ENCODE measurements at regions of chr22 and their contacts with region 1.

Region 1: GRCh38 chr22:37905534-37906363 is at the start of gene MICALL1:
- DNase-seq: peak; percentile 77
- H3K4me3 Mint-ChIP-seq: peak within 1 kb of the TSS; percentile 78
- H3K27ac Mint-ChIP-seq: peak within 1 kb of the TSS; percentile 84
- H3K4me1 Mint-ChIP-seq: peaks cover 37% of the 10 kb centered on the region
- H3K27me3 Mint-ChIP-seq: no peaks in the 10 kb centered on the region
- CTCF ChIP-seq: no peak
- total RNA-seq, gene MICALL1: 164 and 165 TPM in 2 replicates

Region 2: GRCh38 chr22:37843741-37843990 is 62.1 kb before region 1 on chr22:
- CTCF ChIA-PET with region 1: interaction called, 3 read pairs
- POLR2A ChIA-PET with region 1: interaction called, 18 read pairs
- intact Hi-C with region 1: no loop called
- DNase-seq: peak; percentile 17
- H3K4me3 Mint-ChIP-seq: peak overlapping the region; percentile 82
- H3K27ac Mint-ChIP-seq: no peak overlapping the region
- H3K4me1 Mint-ChIP-seq: peaks cover 5% of the 10 kb centered on the region
- H3K27me3 Mint-ChIP-seq: no peaks in the 10 kb centered on the region
- CTCF ChIP-seq: no peak

Region 3: DNA sequence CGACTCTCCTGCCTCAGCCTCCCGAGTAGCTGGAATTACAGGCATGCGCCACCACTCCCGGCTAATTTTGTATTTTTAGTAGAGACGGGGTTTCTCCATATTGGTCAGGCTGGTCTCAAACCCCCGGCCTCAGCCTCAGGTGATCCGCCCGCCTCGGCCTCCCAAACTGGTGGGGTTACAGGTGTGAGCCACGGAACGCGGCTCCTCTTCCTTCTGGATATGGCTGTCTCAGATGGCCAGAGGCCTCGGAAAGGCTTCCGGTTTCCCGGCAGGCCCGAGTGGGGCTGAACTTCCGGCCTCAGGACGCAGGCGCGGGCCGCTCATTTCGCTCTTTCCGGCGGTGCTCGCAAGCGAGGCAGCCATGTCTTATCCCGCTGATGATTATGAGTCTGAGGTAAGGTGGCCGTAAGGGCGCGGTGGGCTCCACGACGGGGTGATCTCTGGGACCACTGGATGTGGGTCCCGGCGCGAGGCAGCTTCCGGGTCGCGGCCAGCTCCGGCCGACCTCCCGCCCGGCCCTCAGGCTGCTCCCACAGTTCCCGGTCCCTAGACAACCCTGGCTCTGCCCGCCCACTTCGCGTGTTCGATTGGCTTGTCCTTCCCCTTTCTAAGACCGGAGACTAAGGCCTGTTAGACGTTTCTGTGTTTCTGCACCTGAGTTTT is 56.5 kb before region 1 on chr22 and contains the start of gene EIF3L:
- CTCF ChIA-PET with region 1: interaction called, 3 read pairs
- POLR2A ChIA-PET with region 1: interaction called, 18 read pairs
- intact Hi-C with region 1: no loop called
- DNase-seq: peak; percentile 89
- H3K4me3 Mint-ChIP-seq: peak within 1 kb of the TSS; percentile 96
- H3K27ac Mint-ChIP-seq: peak within 1 kb of the TSS; percentile 99
- H3K4me1 Mint-ChIP-seq: peaks cover 24% of the 10 kb centered on the region
- H3K27me3 Mint-ChIP-seq: no peaks in the 10 kb centered on the region
- CTCF ChIP-seq: no peak
- total RNA-seq, gene EIF3L: 395 and 505 TPM in 2 replicates

Region 4: GRCh38 chr22:37917874-37918548 is 12.3 kb after region 1 on chr22:
- CTCF ChIA-PET with region 1: interaction called, 4 read pairs
- POLR2A ChIA-PET with region 1: interaction called, 15 read pairs
- intact Hi-C with region 1: no loop called
- DNase-seq: no peak
- H3K4me3 Mint-ChIP-seq: no peak overlapping the region
- H3K27ac Mint-ChIP-seq: no peak overlapping the region
- H3K4me1 Mint-ChIP-seq: no peaks in the 10 kb centered on the region
- H3K27me3 Mint-ChIP-seq: no peaks in the 10 kb centered on the region
- CTCF ChIP-seq: no peak

Region 5: DNA sequence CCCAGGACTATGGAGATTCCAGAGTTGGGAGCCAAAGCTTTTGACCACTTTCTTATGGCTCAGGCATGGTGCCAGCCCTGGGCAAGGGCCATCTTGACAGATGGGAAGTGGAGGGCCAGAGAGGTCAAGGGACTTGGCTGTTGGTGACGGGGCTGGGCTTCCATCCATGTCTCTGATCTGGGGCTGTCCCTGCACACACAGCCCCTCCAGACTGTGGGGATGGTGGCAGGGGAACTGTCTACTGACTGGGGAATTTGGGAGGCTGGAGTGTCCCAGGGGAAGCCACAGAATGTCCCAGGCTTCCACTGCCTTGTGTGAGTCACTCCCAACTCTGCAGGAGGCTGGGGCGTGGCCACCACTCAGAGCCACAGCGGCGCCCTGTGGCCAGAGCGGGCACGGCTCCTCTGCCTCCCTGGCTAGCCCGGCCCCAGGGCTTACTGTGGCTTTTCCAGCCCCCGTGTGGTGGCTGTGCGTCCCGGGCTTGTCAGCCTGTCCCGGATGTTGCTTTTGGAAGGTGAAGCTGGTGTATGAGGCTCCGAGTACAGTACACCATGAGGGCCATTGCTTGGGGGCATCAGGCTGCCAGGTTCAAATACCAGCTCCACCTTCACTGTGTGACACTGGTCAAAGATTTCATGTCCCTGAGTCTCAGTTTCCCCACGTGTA is 28.1 kb after region 1 on chr22:
- CTCF ChIA-PET with region 1: interaction called, 22 read pairs
- POLR2A ChIA-PET with region 1: interaction called, 34 read pairs
- intact Hi-C with region 1: loop called (anchors 1 kb)
- DNase-seq: peak; percentile 95
- H3K4me3 Mint-ChIP-seq: peak overlapping the region; percentile 16
- H3K27ac Mint-ChIP-seq: no peak overlapping the region
- H3K4me1 Mint-ChIP-seq: peaks cover 17% of the 10 kb centered on the region
- H3K27me3 Mint-ChIP-seq: no peaks in the 10 kb centered on the region
- CTCF ChIP-seq: peak; percentile 90

Region 6: GRCh38 chr22:37953437-37954179 is 47.9 kb after region 1 on chr22 and contains the starts of genes C22orf23 and POLR2F:
- CTCF ChIA-PET with region 1: interaction called, 3 read pairs
- POLR2A ChIA-PET with region 1: interaction called, 32 read pairs
- intact Hi-C with region 1: no loop called
- DNase-seq: peak; percentile 96
- H3K4me3 Mint-ChIP-seq: peak within 1 kb of the TSS; percentile 76
- H3K27ac Mint-ChIP-seq: peak within 1 kb of the TSS; percentile 84
- H3K4me1 Mint-ChIP-seq: peaks cover 18% of the 10 kb centered on the region
- H3K27me3 Mint-ChIP-seq: no peaks in the 10 kb centered on the region
- CTCF ChIP-seq: no peak
- total RNA-seq, gene C22orf23: not detected in 2 replicates
- total RNA-seq, gene POLR2F: 87.5 and 97.6 TPM in 2 replicates

Region 7: GRCh38 chr22:38681784-38682335 is 776.1 kb after region 1 on chr22 and contains the start of gene TOMM22:
- CTCF ChIA-PET with region 1: no interaction called
- POLR2A ChIA-PET with region 1: no interaction called
- intact Hi-C with region 1: no loop called
- DNase-seq: peak; percentile 83
- H3K4me3 Mint-ChIP-seq: peak within 1 kb of the TSS; percentile 92
- H3K27ac Mint-ChIP-seq: peak within 1 kb of the TSS; percentile 99
- H3K4me1 Mint-ChIP-seq: peaks cover 5% of the 10 kb centered on the region
- H3K27me3 Mint-ChIP-seq: no peaks in the 10 kb centered on the region
- CTCF ChIP-seq: peak; percentile 39
- total RNA-seq, gene TOMM22: 60.4 and 71.5 TPM in 2 replicates